GM12878 (cell line): ENCODE measurements at regions of chr4 and their contacts with region 1.

Region 1: GRCh38 chr4:142126890-142127497 is 490.6 kb downstream of the IL15 start:
- DNase-seq: peak; percentile 13
- ATAC-seq: peak; percentile 76
- H3K4me3 ChIP-seq: no peak overlapping the region
- H3K27ac ChIP-seq: no peak overlapping the region
- H3K4me1 ChIP-seq: no peaks in the 10 kb centered on the region
- H3K27me3 ChIP-seq: no peaks in the 10 kb centered on the region
- CTCF ChIP-seq: peak; percentile 71 to 77 (median 74)
- EP300 ChIP-seq: no peak
- POLR2A ChIP-seq: no peak
- RAD21 ChIP-seq: peak; percentile 85

Region 2: DNA sequence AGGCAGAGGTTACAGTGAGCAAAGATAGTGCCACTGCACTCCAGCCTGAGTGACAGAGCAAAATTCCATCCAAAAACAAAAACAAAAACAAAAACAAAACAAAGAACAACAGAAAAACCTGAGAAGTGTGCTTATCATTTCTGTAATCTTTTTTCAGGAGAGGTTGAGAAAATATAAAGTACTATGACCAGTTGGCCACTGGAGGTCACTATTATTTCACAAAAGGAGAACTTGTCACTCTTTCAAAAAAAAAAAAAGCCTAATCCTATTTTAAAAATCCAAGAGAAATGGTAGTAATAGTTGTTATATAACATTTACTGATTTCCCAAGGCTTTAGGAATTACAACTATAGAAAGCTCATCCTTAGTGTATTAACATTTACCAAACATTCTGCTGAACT is 968.8 kb before region 1 on chr4:
- CTCF ChIA-PET with region 1: no interaction called
- POLR2A ChIA-PET with region 1: no interaction called
- RAD21 ChIA-PET with region 1: no interaction called
- SMC1A ChIA-PET with region 1: no interaction called
- in situ Hi-C with region 1: no loop called
- intact Hi-C with region 1: loop called (anchors 10 kb)
- DNase-seq: no peak
- ATAC-seq: 0 out of 3 replicates have a peak, but pooled peaks have one; percentile 38
- H3K4me3 ChIP-seq: no peak overlapping the region
- H3K27ac ChIP-seq: no peak overlapping the region
- H3K4me1 ChIP-seq: no peaks in the 10 kb centered on the region
- H3K27me3 ChIP-seq: no peaks in the 10 kb centered on the region
- CTCF ChIP-seq: peak; percentile 17 to 52 (median 36); a peak in 2 of 6 replicates
- EP300 ChIP-seq: no peak
- POLR2A ChIP-seq: no peak
- RAD21 ChIP-seq: peak; percentile 68

Region 3: DNA sequence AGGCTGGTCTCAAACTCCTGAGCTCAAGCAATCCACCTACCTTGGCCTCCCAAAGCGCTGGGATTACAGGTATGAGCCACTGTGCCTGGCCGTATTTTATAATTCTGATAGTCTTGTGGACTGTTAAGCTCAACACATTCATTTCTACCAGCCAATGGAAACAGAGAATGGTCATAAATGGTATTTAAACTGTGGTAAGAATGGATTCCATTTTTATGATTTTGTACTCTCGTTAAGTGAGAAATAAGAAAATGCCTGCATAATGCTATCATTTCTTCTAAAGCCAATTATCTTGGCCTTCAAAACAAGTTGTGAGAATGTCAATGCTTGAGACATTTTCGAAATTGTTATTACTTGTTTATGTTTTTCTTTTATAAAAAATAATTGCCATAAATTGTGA is 169.6 kb before region 1 on chr4:
- CTCF ChIA-PET with region 1: no interaction called
- POLR2A ChIA-PET with region 1: no interaction called
- RAD21 ChIA-PET with region 1: no interaction called
- SMC1A ChIA-PET with region 1: no interaction called
- in situ Hi-C with region 1: no loop called
- intact Hi-C with region 1: no loop called
- DNase-seq: no peak
- ATAC-seq: no peak
- H3K4me3 ChIP-seq: no peak overlapping the region
- H3K27ac ChIP-seq: no peak overlapping the region
- H3K4me1 ChIP-seq: no peaks in the 10 kb centered on the region
- H3K27me3 ChIP-seq: no peaks in the 10 kb centered on the region
- CTCF ChIP-seq: no peak
- EP300 ChIP-seq: no peak
- POLR2A ChIP-seq: no peak
- RAD21 ChIP-seq: no peak

Region 4: DNA sequence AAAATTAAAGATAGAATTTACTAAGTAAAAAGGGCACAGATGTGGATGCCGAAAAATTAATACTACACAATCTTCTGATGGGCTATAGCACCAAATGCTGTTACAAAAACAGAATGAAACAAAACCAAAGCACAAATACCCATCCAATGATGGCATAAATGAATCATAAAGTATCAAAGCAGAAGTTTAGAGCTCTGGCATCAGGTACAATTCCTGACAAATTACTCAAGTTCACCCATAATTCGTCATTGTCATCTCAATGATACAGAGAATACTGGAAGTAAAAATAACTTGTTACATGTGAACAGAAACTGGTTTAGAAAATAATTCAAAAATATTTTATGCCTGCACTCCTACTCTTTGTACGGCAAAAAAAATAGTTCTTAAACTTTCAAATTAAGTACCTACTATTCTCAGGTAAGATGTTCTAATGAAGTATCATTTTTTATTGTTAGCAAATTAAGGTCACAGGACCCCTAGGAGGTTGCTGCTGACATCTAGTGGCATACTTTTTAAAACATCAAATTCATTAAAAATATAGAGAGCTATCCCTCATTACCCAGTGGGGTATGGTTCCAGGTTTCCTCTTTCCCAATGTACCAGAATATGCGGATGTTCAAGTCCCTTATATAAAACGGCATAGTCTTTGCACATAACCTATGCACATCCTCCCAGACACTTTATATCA is 593.0 kb after region 1 on chr4:
- CTCF ChIA-PET with region 1: interaction called, 29 read pairs
- POLR2A ChIA-PET with region 1: no interaction called
- RAD21 ChIA-PET with region 1: interaction called, 7 read pairs
- SMC1A ChIA-PET with region 1: interaction called, 7 read pairs
- in situ Hi-C with region 1: loop called (anchors 25 kb)
- intact Hi-C with region 1: loop called (anchors 1 kb)
- DNase-seq: no peak
- ATAC-seq: peak; percentile 67
- H3K4me3 ChIP-seq: no peak overlapping the region
- H3K27ac ChIP-seq: no peak overlapping the region
- H3K4me1 ChIP-seq: no peaks in the 10 kb centered on the region
- H3K27me3 ChIP-seq: no peaks in the 10 kb centered on the region
- CTCF ChIP-seq: peak; percentile 19 to 49 (median 32); a peak in 3 of 6 replicates
- EP300 ChIP-seq: no peak
- POLR2A ChIP-seq: no peak
- RAD21 ChIP-seq: peak; percentile 54

Region 5: DNA sequence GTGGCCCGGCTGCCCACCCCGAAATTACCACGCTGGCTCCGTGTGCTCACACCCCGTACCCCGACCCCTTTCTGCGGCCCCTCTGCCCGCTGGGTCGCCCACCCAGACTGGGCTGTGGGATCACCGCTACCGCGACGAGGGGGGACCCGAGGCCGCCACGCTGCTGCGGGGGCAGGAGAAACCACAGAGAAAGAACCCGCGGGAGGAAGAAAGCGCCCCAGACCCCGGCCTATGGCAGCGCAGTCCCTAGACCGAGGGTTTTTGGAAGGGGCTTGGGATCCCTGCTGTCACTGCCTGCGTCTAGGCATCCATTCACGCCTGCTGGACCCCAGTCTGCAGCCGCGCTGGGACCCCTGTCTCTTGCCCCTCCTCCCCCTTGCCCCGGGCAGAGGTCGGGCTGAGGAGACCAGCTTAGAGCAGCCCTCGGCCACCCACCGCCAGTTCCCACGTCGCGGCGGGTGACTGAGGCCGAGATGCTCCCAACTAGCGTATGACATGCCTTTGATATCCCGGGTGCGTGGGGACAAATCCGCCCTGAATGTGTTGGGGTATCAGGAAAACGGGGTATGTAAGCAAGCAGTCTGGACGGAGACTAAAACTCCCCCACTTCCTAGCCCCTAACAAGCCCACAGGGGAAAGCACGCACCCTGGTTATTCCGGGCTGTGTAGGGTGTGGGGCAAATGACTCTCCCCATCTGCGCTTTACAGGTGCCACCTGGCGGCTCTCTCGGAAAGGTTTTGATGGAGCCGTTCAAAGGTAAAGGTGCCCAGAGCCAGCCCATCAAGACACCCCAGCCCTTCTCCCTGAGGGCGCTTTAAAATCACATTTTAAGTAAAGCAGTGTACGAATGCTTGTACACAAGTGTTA is 720.0 kb after region 1 on chr4:
- CTCF ChIA-PET with region 1: interaction called, 8 read pairs
- POLR2A ChIA-PET with region 1: no interaction called
- RAD21 ChIA-PET with region 1: no interaction called
- SMC1A ChIA-PET with region 1: interaction called, 6 read pairs
- in situ Hi-C with region 1: loop called (anchors 10 kb)
- intact Hi-C with region 1: loop called (anchors 2 kb)
- DNase-seq: no peak
- ATAC-seq: peak; percentile 90
- H3K4me3 ChIP-seq: no peak overlapping the region
- H3K27ac ChIP-seq: no peak overlapping the region
- H3K4me1 ChIP-seq: no peaks in the 10 kb centered on the region
- H3K27me3 ChIP-seq: peaks cover 4 to 6% of the 10 kb centered on the region in 2 experiments; a peak in 2 of 4 replicates
- CTCF ChIP-seq: peak; percentile 31 to 46 (median 31); a peak in 5 of 6 replicates
- EP300 ChIP-seq: no peak
- POLR2A ChIP-seq: no peak
- RAD21 ChIP-seq: peak; percentile 51

Region 6: DNA sequence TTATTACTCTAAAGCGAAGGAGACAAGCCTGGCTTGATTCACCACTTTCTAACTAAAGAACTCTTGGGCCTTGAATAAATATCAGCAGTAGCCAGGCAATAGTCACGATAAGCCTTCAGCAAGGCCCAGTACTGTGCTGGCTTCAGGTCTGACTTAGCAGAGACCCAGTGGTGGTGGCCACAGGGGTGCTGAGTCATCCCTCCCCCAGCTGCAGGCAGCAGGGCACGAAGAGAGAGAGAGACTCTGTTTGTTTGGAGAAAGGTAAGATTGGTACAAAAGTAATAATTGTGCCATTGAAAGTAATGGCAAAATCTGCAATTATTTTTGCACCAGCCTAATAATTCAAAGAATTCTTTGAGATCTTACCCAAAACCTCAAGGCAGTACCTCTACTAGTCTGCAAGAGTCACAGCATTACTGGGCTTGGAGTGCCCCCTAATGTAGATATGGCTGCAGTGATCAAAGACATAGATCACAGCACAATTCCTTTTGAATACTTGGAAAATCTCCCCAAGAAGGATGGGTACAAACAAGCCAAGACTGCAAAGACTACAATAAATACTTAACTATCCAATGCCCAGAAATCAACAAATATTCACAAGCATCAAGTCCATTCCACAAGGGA is 898.2 kb after region 1 on chr4:
- CTCF ChIA-PET with region 1: no interaction called
- POLR2A ChIA-PET with region 1: no interaction called
- RAD21 ChIA-PET with region 1: no interaction called
- SMC1A ChIA-PET with region 1: no interaction called
- in situ Hi-C with region 1: no loop called
- intact Hi-C with region 1: loop called (anchors 10 kb)
- DNase-seq: no peak
- ATAC-seq: peak; percentile 70
- H3K4me3 ChIP-seq: no peak overlapping the region
- H3K27ac ChIP-seq: no peak overlapping the region
- H3K4me1 ChIP-seq: peaks cover 4% of the 10 kb centered on the region
- H3K27me3 ChIP-seq: no peaks in the 10 kb centered on the region
- CTCF ChIP-seq: peak; percentile 32 to 53 (median 51); a peak in 5 of 6 replicates
- EP300 ChIP-seq: no peak
- POLR2A ChIP-seq: no peak
- RAD21 ChIP-seq: peak; percentile 80